Mucosa of descending colon (tissue), 3 donors: ENCODE measurements at regions of chr15 and their contacts with region 1.

Region 1: GRCh38 chr15:76139368-76140073 is 79.7 kb downstream of the TMEM266 start:
- DNase-seq: peak in 2 of 3 donors; percentile 53 to 90
- ATAC-seq: peak; percentile 91
- H3K4me3 ChIP-seq: no peak overlapping the region
- H3K4me1 ChIP-seq: no peaks in the 10 kb centered on the region
- CTCF ChIP-seq: peak; percentile 85

Region 2: DNA sequence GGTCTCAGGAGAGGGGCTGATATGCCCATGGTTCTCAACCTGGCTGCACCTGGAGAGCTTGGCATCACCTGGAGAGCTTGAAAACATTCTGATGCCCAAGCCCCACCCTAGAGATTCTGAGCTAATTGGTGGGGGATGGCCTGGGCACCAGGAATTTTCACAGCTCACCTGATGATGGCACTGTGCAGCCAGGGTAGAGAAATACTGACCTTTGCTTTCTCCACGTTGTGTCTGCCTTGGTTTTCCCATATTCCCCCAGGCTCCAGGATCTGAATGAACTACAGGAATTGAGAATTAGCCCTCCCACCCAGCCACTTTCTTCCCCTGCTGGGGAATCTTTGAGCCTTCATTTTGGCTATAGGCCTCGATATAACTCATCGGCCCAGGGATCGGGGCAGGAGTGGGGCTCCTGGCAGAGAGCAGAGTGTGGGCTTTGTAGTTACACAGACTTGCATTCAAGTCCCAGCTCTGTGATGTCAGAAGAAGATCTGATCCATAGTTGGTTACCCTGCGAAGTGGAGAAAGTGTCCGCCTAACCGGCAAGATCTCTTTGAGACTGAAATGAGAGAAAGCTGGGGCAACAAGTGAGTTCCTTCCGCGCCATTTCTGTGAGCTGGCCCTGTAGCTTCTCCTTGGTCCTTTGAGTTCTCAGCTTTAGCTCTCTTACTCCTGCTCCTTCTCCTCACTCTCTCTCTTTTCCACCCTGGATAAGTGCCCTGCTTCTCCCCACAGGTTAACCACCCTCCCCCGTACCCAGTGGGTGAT is 329.4 kb before region 1 on chr15:
- intact Hi-C with region 1: loop called in 1 of 2 experiments (anchors 10 kb)
- DNase-seq: peak in 2 of 3 donors; percentile 33 to 38
- ATAC-seq: peak; percentile 72
- H3K4me3 ChIP-seq: no peak overlapping the region
- H3K4me1 ChIP-seq: no peaks in the 10 kb centered on the region
- CTCF ChIP-seq: no peak

Region 3: GRCh38 chr15:76057332-76058000 is 82.1 kb before region 1 on chr15:
- intact Hi-C with region 1: loop called (anchors 5 to 10 kb)
- DNase-seq: peak in 1 of 3 donors; percentile 71
- ATAC-seq: peak; percentile 42
- H3K4me3 ChIP-seq: no peak overlapping the region
- H3K4me1 ChIP-seq: no peaks in the 10 kb centered on the region
- CTCF ChIP-seq: peak; percentile 11

Region 4: GRCh38 chr15:76285239-76285825 is 145.8 kb after region 1 on chr15:
- intact Hi-C with region 1: no loop called
- DNase-seq: no peak
- ATAC-seq: no peak
- H3K4me3 ChIP-seq: no peak overlapping the region
- H3K4me1 ChIP-seq: no peaks in the 10 kb centered on the region
- CTCF ChIP-seq: no peak